Dendritic cell treated with granulocyte-macrophage colony-stimulating factor and Interleukin-4, amounts not matched to agents 40 ng/mL and 50 ng/mL, for 4 days (primary cell): ENCODE measurements at regions of chr2 and their contacts with region 1.

Region 1: DNA sequence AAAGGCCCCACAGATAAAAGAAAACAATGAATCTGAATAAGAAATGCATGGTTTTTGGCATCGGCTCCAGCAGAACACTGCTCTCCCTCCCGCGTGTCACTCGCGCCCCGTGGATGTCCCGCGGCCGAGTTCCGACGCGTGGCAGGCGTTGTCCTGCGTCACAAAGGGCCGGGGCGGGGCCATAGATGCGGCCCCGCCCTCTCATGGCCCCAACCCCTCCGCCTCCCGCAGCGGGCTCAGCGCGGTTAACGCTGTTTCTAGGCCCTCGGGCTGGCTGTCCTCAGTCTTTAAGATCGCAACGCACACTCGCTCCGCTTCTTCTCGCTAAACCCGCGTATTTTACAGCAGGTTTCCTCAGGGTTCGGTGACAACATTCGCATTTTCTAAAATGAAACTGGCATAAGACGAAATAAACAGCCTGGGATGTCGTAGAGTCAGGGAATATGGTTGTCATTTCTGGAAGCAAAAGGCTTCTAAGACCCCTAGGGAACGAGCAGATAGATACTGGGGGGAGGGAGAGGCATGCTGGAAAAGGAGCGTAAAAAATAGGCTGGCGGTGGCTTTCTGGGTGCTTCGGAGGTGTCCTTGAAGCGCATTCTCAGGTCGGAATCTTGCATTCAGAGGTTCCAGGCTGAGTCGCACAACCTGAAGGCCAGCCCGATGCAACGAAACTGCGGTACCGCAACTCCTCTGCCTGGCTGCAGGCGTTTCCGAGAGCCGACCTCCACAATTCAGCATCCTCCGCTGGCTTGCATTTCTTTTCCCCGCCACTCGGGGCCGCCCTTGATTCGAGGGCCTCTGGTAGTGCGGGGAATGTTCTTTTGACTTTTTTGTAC is at the start of gene FKBP7:
- H3K4me3 Mint-ChIP-seq: peak within 1 kb of the TSS; percentile 95
- H3K27ac Mint-ChIP-seq: peak within 1 kb of the TSS; percentile 98
- H3K4me1 Mint-ChIP-seq: peaks cover 23% of the 10 kb centered on the region
- H3K27me3 Mint-ChIP-seq: no peaks in the 10 kb centered on the region

Region 2: GRCh38 chr2:178225006-178225805 is 253.5 kb before region 1 on chr2:
- intact Hi-C with region 1: no loop called
- H3K4me3 Mint-ChIP-seq: no peak overlapping the region
- H3K27ac Mint-ChIP-seq: no peak overlapping the region
- H3K4me1 Mint-ChIP-seq: peaks cover 4% of the 10 kb centered on the region
- H3K27me3 Mint-ChIP-seq: peaks cover 1% of the 10 kb centered on the region

Region 3: GRCh38 chr2:178450774-178451525 is 27.7 kb before region 1 on chr2 and contains the starts of genes PJVK and PRKRA:
- intact Hi-C with region 1: loop called (anchors 1 kb)
- H3K4me3 Mint-ChIP-seq: peak within 1 kb of the TSS; percentile 88
- H3K27ac Mint-ChIP-seq: peak within 1 kb of the TSS; percentile 98
- H3K4me1 Mint-ChIP-seq: peaks cover 26% of the 10 kb centered on the region
- H3K27me3 Mint-ChIP-seq: peaks cover 3% of the 10 kb centered on the region

Region 4: DNA sequence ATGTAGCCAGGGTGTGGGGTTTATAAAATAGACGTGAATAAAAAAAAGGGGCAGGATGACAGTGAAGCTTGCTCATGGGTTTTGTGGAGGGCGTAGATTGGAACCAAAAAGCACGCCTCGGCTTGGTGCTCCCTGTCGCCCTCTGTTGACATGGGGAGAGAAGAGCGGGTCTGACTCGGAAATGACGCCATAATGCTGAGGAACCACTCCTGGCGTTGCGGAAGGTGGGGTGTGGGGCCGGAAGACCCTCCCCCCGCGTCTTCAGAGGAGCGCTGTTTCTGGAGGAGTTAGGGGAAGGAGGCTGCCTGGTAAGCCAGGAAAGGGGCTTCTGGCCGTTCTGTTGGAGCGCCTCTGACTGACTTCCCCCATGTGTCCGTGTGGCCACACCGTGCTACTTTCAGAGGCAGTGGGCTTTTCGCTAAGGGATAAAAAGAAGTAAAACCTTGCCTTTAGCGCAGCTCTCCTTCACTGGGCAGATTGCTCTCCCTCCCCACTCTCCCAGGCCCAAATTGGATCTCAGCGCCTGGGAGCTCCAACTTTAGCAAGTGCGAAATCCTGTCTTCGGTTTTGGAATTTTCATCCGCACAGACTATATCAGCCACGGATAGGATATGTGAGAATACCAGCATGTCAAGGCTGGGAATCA is 44.4 kb after region 1 on chr2:
- intact Hi-C with region 1: loop called (anchors 2 kb)
- H3K4me3 Mint-ChIP-seq: peak overlapping the region; percentile 84
- H3K27ac Mint-ChIP-seq: peak overlapping the region; percentile 86
- H3K4me1 Mint-ChIP-seq: peaks cover 25% of the 10 kb centered on the region
- H3K27me3 Mint-ChIP-seq: no peaks in the 10 kb centered on the region

Region 5: DNA sequence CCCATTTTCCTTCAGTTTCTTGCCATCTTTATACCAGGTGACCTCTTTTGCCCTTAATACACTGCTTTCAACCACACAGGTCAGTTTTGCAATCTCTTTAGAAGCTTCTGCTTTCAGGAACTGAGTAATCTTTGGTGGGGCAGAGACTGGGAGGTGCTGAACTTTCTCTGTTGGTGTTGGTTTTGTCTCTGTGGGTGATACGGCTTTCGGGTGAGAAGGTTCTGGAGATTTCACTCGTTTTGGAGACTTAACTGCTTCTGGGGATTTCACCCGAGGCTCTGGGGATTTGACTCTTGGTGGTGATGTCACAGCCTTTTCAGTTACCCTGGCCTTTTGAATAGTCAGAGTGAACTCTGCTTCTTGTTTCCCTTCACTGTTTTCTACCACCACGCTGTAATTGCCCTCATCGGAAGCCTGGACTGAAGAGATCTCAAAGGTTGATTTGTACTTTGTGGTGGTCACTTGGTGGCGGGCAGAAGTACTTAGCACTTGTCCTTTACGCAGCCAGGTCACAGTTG is 52.0 kb after region 1 on chr2:
- intact Hi-C with region 1: loop called (anchors 2 kb)
- H3K4me3 Mint-ChIP-seq: peak overlapping the region; percentile 71
- H3K27ac Mint-ChIP-seq: peak overlapping the region; percentile 98
- H3K4me1 Mint-ChIP-seq: peaks cover 60% of the 10 kb centered on the region
- H3K27me3 Mint-ChIP-seq: no peaks in the 10 kb centered on the region